ENCODE measurements at regions of chr7 and their contacts with region 1.

Region 1: GRCh38 chr7:30977896-30978564 is 14.3 kb downstream of the GHRHR start:
- H3K4me3 Mint-ChIP-seq: no peak overlapping the region
- H3K27ac Mint-ChIP-seq: no peak overlapping the region
- H3K4me1 Mint-ChIP-seq: no peaks in the 10 kb centered on the region
- H3K27me3 Mint-ChIP-seq: peaks cover 14% of the 10 kb centered on the region

Region 2: DNA sequence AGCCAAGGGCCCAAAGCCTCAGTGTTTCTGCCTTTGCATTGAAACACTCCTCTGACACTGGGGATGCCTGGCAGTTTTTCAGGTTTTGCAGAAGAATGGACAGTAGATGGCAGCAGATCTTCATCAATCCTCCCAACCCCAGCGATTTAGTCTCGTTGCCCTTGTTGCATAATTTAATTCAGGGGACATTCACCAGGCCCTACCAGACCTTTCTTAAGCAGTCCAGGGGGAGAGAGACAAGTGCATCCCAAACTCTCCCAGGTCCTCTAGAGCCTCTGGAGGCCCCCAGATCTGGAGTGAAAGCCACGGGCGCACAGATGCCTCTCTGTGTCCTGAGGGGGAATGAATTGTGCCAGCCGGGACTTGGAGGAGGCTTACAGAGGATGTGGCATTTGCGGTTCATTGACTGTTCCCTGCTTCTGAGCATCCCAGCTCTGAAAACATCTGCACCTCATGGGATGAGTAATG is 177.2 kb before region 1 on chr7:
- intact Hi-C with region 1: loop called (anchors 2 kb)
- H3K4me3 Mint-ChIP-seq: no peak overlapping the region
- H3K27ac Mint-ChIP-seq: no peak overlapping the region
- H3K4me1 Mint-ChIP-seq: peaks cover 4% of the 10 kb centered on the region
- H3K27me3 Mint-ChIP-seq: no peaks in the 10 kb centered on the region

Region 3: GRCh38 chr7:30963805-30964204 is 14.2 kb before region 1 on chr7 and contains the start of gene GHRHR:
- intact Hi-C with region 1: no loop called
- H3K4me3 Mint-ChIP-seq: no peak within 1 kb of the TSS
- H3K27ac Mint-ChIP-seq: no peak within 1 kb of the TSS
- H3K4me1 Mint-ChIP-seq: no peaks in the 10 kb centered on the region
- H3K27me3 Mint-ChIP-seq: peaks cover 6% of the 10 kb centered on the region

Region 4: DNA sequence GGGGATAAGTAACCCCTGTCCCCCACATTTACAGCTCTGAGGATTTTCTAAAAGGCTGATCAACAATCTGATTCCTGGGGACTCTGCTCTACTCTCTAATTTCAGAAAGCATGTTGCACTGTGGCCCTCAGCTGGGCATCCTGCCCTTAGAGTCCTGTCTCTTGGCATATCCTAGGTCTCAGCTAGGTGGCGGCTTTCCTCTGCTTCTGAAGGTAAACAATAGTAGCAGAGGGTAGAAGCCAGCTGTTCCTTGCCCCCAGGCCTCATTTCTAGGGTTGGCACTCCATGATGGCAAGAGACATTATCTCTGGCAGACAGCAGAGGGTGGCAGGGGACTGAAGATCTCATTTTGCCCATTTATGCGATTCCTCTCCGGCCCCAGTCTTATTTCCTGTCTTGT is 151.0 kb after region 1 on chr7:
- intact Hi-C with region 1: no loop called
- H3K4me3 Mint-ChIP-seq: no peak overlapping the region
- H3K27ac Mint-ChIP-seq: no peak overlapping the region
- H3K4me1 Mint-ChIP-seq: no peaks in the 10 kb centered on the region
- H3K27me3 Mint-ChIP-seq: no peaks in the 10 kb centered on the region

Measured in dendritic cell treated with granulocyte-macrophage colony-stimulating factor and Interleukin-4, amounts not matched to agents 40 ng/mL and 50 ng/mL, for 4 days (primary cell).